Posterior vena cava (tissue), 2 donors: ENCODE measurements at regions of chr9 and their contacts with region 1.

Region 1: GRCh38 chr9:6673326-6674025 is 27.9 kb upstream of the GLDC start:
- DNase-seq: no peak

Region 2: GRCh38 chr9:6584881-6585597 is 88.4 kb before region 1 on chr9:
- intact Hi-C with region 1: loop called in 1 of 2 experiments (anchors 5 kb)
- DNase-seq: no peak

Region 3: DNA sequence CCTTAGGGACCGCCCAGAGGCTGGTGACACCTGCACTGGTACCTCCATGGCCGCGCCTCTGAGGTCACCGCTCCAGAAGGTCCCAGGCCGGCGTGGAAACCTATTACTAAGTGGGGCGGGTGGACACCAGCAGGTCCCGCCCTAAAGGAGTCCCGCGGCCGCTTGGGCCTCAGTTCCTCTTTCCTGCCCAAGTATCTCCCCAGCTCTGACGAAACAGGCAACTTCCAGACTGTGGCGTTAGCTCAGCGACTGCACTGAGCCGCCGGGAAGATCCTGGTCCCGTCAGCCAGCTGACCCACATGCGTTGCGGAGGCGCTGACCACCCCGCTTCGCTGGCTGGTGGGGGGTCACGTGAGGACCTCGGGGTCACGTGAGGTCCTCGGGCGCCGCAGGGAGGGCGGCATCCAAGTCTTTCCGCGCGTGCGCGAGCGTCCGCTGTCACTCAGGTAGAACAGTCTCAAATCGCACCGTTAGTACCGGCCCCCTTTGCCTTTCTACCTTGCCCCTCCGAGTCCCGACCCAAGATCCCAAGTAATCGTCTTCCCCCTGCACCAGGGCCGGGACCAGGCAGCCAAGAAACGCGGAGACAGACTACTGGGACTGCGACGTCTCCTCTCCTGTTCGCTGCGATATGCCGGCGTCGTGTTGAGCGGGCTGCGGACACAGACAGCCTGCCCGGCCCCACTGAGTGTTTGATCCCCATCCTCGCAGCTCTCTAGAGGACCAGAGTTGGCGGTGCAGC is 30.6 kb after region 1 on chr9:
- intact Hi-C with region 1: no loop called
- DNase-seq: peak; percentile 96